Activated CD4-positive, alpha-beta T cell treated with anti-CD3 and anti-CD28 coated beads for 36 hours (primary cell): ENCODE measurements at regions of chr14 and their contacts with region 1.

Region 1: DNA sequence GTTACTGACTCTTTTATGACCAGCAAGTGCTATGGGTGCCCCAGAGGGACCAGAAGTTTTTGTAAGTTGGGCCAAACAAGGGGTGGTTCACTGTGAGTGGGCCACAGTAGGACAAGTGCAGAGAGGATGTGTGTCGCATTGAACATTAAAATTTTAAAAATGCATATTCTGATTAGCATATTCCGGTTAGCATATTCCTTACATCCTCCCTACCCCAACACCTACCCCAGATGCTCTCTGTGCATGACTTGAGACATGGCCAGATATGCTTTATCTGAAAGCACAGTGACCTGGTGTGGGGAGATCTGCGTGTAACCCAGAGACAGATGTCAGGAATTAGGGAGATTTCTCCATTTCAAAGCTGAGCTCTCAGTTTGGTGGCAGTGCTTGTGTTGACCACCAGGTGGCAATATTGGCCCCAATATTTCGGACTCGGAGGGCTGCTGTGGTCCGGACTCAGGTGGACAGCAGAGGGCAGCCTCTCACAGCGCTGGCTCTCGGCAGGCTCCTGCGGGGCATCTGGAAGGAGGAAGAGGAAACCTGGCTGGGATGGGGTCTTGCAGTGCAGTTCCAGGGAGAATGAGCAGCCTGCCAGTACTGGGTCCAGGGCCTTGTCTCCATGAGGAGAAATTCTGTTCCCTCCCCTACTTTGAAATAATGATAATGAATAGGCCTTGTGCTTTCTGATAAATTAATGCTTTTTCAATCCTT is 1.6 kb upstream of the CEBPE start:
- DNase-seq: peak; percentile 91
- ATAC-seq: peak; percentile 93
- H3K4me3 Mint-ChIP-seq: no peak overlapping the region
- H3K27ac Mint-ChIP-seq: peak overlapping the region; percentile 68
- H3K4me1 Mint-ChIP-seq: peaks cover 47% of the 10 kb centered on the region
- H3K27me3 Mint-ChIP-seq: no peaks in the 10 kb centered on the region

Region 2: GRCh38 chr14:23130871-23131270 is 10.2 kb after region 1 on chr14:
- CTCF ChIA-PET with region 1: interaction called, 19 read pairs
- POLR2A ChIA-PET with region 1: no interaction called
- intact Hi-C with region 1: no loop called
- DNase-seq: no peak
- ATAC-seq: no peak
- H3K4me3 Mint-ChIP-seq: no peak overlapping the region
- H3K27ac Mint-ChIP-seq: no peak overlapping the region
- H3K4me1 Mint-ChIP-seq: no peaks in the 10 kb centered on the region
- H3K27me3 Mint-ChIP-seq: no peaks in the 10 kb centered on the region

Region 3: DNA sequence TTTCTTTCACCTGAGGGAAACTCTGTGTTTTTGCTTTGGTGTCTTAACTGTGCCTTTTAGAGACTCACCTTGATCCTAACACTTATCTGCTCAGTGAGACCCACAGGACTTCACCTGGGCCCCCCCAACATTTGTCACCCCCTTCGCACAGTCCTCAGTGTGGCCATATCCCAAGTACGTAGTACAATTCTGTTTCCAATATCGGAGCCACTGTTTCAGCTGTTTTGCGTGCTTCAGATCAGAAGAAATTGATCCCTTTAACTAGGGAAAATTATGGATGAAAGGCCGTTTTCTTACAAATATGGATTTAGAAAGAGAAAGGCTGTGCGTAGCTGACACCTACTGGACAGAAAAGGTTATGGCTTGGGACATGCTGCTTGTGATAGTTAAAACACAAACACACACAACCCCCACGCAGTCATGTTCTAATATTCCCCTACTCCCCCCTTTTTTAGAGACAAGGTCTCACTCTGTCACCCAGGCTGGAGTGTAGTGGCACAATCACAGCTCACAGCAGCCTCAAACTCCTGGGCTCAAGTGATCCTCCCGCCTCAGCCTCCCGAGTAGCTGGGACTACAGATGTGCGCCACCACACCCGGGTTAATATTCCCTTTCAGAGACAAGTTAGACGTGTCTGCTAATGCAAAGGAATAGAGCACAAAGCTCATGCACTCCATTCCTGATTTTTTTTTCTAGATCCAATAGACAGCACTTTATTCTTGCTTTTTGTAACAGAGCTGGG is 66.4 kb after region 1 on chr14:
- CTCF ChIA-PET with region 1: interaction called, 276 read pairs
- POLR2A ChIA-PET with region 1: interaction called, 3 read pairs
- intact Hi-C with region 1: loop called (anchors 1 kb)
- DNase-seq: peak; percentile 39
- ATAC-seq: peak; percentile 74
- H3K4me3 Mint-ChIP-seq: no peak overlapping the region
- H3K27ac Mint-ChIP-seq: no peak overlapping the region
- H3K4me1 Mint-ChIP-seq: peaks cover 2% of the 10 kb centered on the region
- H3K27me3 Mint-ChIP-seq: no peaks in the 10 kb centered on the region

Region 4: DNA sequence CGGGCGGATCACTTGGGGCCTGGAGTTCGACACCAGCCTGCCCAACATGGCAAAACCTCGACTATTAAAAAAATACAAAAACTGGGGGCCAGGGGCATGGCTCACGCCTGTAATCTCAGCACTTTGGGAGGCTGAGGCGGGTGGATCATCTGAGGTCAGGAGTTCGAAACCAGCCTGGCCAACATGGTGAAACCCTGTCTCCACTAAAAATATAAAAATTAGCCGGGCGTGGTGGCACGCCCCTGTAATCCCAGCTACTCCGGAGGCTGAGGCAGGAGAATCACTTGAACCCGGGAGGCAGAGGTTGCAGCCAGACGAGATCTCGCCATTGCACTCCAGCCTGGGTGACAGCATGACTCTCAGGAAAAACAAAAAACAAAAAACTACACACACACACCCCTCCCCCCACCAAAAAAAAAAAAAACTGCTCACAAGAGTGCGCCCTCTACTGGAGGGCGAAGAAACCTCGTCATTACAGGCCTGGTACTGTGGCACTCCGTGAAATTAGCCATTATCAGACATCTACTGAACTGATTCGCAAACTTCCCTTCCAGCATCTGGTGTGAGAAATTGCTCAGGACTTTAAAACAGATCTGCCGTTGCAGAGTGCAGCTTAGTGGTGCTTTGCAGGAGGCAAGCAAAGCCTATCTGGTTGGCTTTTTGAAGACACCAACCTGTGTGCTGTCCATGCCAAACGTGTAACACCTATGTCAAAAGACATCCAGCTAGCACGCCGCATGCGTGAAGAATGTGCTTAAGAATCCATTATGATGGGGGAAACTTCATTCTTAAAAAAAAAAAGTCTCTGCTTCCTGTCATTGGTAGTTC is 174.3 kb after region 1 on chr14:
- CTCF ChIA-PET with region 1: interaction called, 35 read pairs
- POLR2A ChIA-PET with region 1: no interaction called
- intact Hi-C with region 1: loop called (anchors 1 to 2 kb)
- DNase-seq: peak; percentile 68
- ATAC-seq: peak; percentile 91
- H3K4me3 Mint-ChIP-seq: peak overlapping the region; percentile 7
- H3K27ac Mint-ChIP-seq: peak overlapping the region; percentile 47
- H3K4me1 Mint-ChIP-seq: peaks cover 20% of the 10 kb centered on the region
- H3K27me3 Mint-ChIP-seq: no peaks in the 10 kb centered on the region